ENCODE measurements at regions of chr7 and their contacts with region 1.

Region 1: GRCh38 chr7:134388336-134389019 is 70.4 kb downstream of the AKR1B1 start:
- DNase-seq: no peak
- H3K4me3 ChIP-seq: no peak overlapping the region
- H3K27ac ChIP-seq: no peak overlapping the region
- H3K4me1 ChIP-seq: no peaks in the 10 kb centered on the region
- H3K27me3 ChIP-seq: no peaks in the 10 kb centered on the region; the same call in 1 of the 2 replicates
- CTCF ChIP-seq: no peak
- EP300 ChIP-seq: no peak
- RAD21 ChIP-seq: no peak

Region 2: DNA sequence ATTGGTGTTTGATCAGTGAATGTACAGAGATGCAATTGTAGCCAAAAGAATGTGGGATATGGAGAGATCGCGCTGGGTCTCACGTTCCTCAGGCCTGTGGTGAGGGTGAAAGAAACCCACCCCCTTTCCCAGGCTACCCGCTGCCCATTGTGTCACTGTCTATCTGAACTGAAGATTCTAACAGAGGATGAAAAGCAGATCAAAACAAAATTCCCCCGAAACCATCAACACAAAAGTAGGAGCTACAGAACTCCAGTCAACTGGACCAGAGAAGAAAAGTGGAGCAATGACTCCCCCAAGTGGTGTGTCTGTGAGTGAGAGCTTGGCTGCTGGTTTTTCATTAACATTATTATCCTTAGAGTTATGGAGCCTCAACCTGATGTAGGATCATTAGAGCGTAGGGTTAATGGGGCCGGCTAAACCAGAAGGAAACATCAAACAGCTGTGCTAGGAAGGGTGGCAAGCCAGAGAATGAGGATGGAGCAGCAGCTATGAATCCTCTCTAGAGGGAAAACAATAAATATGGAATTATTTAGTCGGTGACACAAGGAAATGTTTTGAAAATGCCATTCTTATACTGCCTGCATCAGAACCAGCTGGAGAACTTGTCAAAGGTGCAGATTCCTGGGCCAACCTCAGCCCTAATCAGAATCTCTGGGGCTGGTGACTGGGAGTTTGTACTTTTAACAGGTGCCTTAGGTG is 32.1 kb after region 1 on chr7:
- CTCF ChIA-PET with region 1: interaction called, 10 read pairs
- POLR2A ChIA-PET with region 1: no interaction called
- DNase-seq: peak; percentile 77
- H3K4me3 ChIP-seq: peak overlapping the region in 1 of 2 experiments; percentile 19; a peak in 1 of 4 replicates
- H3K27ac ChIP-seq: peak overlapping the region in 1 of 2 experiments; percentile 30; a peak in 2 of 4 replicates
- H3K4me1 ChIP-seq: peaks cover 0 to 7% of the 10 kb centered on the region in 2 experiments; a peak in 1 of 4 replicates
- H3K27me3 ChIP-seq: no peaks in the 10 kb centered on the region
- CTCF ChIP-seq: peak; percentile 86
- EP300 ChIP-seq: peak in 1 of 2 experiments; percentile 47; a peak in 2 of 4 replicates
- RAD21 ChIP-seq: peak; percentile 95